Lower lobe of right lung (tissue), 2 donors: ENCODE measurements at regions of chr1 and their contacts with region 1.

Region 1: GRCh38 chr1:24385160-24385940 is 28.2 kb downstream of the STPG1 start:
- DNase-seq: no peak
- ATAC-seq: no peak
- H3K4me3 ChIP-seq: no peak overlapping the region
- H3K27ac ChIP-seq: peak overlapping the region; percentile 70
- H3K4me1 ChIP-seq: peaks cover 46% of the 10 kb centered on the region
- H3K27me3 ChIP-seq: no peaks in the 10 kb centered on the region
- CTCF ChIP-seq: peak; percentile 29

Region 2: GRCh38 chr1:24201941-24202440 is 183.4 kb before region 1 on chr1:
- intact Hi-C with region 1: loop called (anchors 10 kb)
- DNase-seq: peak; percentile 70
- ATAC-seq: peak; percentile 75 to 80
- H3K4me3 ChIP-seq: no peak overlapping the region
- H3K27ac ChIP-seq: no peak overlapping the region
- H3K4me1 ChIP-seq: peaks cover 4% of the 10 kb centered on the region
- H3K27me3 ChIP-seq: no peaks in the 10 kb centered on the region
- CTCF ChIP-seq: peak; percentile 77